ENCODE measurements at regions of chr7 and their contacts with region 1.

Region 1: GRCh38 chr7:38215735-38216670 is 38.0 kb downstream of the STARD3NL start:
- DNase-seq: peak; percentile 83

Region 2: GRCh38 chr7:38086857-38087256 is 129.1 kb before region 1 on chr7:
- CTCF ChIA-PET with region 1: no interaction called
- POLR2A ChIA-PET with region 1: no interaction called
- DNase-seq: no peak

Region 3: DNA sequence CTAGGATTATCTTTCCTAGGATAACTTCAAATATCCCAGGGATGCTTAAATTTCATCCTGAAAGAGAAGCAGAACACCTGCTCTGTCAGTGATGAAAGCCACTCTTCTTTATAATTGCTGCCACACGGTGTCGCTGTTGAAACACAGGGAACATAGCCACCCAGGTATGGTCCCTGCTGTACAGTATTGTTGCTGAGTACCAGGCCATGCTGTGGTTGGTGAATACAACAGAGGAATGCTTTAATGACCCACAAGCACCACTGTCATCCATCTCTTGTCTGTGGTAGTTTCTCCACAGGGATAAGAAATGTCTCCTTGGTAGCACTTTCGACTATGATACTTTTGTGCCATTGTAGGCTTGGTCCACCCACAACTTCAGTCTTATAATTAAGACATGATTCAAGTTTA is 108.5 kb before region 1 on chr7:
- CTCF ChIA-PET with region 1: interaction called, 11 read pairs
- POLR2A ChIA-PET with region 1: no interaction called
- DNase-seq: peak; percentile 64

Region 4: DNA sequence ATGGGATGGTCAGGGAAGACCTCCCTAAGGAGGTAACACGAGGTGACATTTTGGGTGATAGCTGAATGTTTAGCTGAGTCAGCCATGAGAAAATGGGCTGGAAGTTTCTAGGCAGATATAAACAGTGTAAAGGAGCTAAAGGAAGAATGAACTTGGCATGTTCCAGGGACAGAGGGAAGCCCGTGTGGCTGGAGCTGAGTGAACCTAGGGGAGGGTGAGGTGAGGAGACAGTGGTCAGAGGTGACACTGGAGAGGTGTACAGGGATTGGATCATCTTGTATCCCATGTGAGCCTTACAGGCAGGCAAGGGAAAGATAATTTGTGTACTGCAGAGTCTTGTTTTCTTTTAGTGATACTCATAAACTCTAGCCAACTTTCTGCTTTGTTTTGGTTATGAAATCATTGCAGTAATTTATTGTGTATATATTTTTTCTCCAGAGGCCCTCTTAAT is 36.2 kb before region 1 on chr7:
- CTCF ChIA-PET with region 1: interaction called, 11 read pairs
- POLR2A ChIA-PET with region 1: interaction called, 7 read pairs
- DNase-seq: no peak

Region 5: DNA sequence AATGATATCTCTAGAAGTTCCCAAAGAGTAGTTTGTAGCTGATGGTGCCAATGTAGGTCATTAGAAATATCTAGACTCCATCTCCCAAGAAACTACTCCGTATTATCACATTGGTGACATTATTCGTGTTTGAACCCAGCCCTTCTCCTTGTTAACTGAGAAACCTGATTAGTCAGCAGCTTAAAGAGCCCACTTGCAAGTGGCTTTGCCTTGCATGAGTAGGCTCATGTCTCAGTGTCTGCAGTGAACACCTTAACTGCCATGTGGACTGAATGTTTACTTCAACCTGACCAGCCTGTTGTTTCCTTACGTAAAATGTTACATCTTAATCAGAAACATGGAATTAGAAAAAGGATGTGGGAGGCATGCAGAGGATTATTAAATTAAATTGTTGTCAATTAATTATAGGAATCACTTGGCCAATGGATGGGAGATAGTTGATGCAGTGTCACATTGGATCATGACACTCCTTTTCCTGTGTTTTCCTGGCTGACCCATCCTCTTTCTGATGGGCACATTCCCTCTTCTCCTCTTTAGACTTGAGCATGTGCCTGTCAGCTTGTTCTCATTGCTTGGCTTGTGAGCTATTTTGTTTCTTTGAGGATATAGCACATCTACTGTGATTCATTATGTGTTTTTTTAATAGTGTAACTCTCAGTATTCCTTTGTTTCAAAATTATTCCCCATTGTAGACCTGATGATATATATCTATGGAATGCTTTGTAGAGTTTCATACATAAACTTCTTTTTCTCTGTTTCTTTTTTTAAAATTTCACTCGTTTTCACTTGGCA is 20.0 kb before region 1 on chr7:
- CTCF ChIA-PET with region 1: interaction called, 35 read pairs
- POLR2A ChIA-PET with region 1: no interaction called
- DNase-seq: no peak

Region 6: GRCh38 chr7:38318803-38319416 is 102.9 kb after region 1 on chr7:
- CTCF ChIA-PET with region 1: interaction called, 40 read pairs
- POLR2A ChIA-PET with region 1: no interaction called
- DNase-seq: peak; percentile 77

Region 7: DNA sequence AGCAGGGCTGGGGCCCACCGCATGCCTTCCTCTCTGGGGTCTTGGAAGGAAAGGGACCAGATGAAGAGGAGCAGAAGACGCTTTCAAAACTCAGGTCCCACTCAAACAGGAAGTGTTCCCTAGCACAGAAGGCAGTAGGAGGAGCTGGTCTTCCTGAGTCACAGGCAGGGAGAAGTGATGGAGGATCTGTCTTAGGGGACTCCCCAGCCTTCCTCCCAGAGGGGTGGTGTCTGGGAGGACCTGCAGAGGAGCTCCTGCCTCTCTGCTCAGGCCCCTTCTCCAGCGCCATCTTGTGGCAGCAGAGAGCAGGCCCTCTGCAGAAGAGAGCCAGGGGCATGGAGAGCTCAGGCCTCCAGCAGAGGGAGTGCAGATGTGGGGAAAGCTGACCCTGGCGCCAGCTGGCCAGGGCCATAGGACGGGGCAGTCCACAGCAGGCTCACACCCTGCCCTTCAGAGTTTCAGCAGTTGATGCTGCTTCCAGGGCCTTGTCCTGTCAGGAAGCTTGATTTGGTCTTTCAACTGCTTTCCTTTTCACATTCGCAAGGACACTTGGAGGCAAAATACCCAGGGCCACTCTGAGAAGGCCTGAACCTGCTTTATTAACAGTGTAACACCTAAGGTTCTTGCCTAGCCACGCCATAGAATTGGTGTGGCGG is 119.6 kb after region 1 on chr7:
- CTCF ChIA-PET with region 1: interaction called, 28 read pairs
- POLR2A ChIA-PET with region 1: no interaction called
- DNase-seq: peak; percentile 77

Measured in HEK293T (cell line).